ENCODE measurements at regions of chr1 and their contacts with region 1.

Region 1: GRCh38 chr1:211514030-211514754 is 22.2 kb upstream of the RD3 start:
- DNase-seq: peak; percentile 70
- H3K4me3 ChIP-seq: no peak overlapping the region
- H3K27ac ChIP-seq: no peak overlapping the region
- H3K4me1 ChIP-seq: no peaks in the 10 kb centered on the region
- H3K27me3 ChIP-seq: no peaks in the 10 kb centered on the region
- CTCF ChIP-seq: peak in 3 of 4 experiments; percentile 54 to 77 (median 75)
- POLR2A ChIP-seq: no peak

Region 2: DNA sequence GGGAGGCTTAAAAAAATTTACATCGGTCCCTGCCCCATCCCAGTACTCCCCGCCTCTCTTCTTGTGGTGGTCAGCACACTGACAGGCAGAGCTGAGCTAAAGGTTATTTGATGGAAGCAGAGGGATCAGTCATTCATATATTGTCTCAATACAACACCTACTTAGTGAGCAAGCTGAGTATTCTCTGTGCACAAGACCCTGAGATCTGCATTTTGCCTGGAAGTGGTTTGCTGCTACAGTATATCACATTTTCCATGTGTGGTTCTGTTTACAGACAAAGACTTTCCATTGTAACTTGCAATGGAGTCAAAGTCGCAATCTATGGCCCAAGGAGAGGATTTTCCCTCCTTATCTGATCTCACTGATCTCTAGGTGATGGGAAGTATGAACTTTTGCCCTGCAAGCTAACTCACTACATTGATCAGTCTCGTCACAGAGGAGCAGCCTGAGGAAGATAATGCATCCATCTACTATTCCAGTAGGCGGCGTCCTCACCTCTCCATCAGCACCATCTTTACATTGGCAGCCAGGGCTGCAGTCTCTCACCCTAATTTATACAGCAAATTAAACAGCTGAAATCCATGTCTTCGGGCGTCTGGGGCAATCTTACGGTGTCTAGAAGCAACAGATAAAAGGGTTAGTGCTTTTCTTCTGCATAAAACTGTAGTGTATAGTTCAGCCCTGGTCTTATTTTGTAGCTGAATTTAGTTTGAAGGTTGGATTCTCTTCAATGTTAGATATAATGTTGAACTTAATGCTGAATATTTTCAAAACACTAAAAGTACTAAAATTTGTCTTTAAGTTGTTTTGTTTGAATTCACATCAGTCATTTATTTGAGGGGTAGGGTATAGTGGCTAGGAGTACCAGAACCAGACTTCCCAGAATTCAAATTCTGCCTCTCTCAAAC is 190.8 kb before region 1 on chr1:
- intact Hi-C with region 1: loop called (anchors 10 kb)
- DNase-seq: peak; percentile 54
- H3K4me3 ChIP-seq: no peak overlapping the region
- H3K27ac ChIP-seq: no peak overlapping the region
- H3K4me1 ChIP-seq: no peaks in the 10 kb centered on the region
- H3K27me3 ChIP-seq: no peaks in the 10 kb centered on the region
- CTCF ChIP-seq: peak; percentile 40 to 81 (median 68)
- POLR2A ChIP-seq: no peak

Region 3: GRCh38 chr1:211382714-211383480 is 131.3 kb before region 1 on chr1:
- intact Hi-C with region 1: loop called (anchors 10 kb)
- DNase-seq: peak; percentile 89
- H3K4me3 ChIP-seq: peak overlapping the region; percentile 50 to 63
- H3K27ac ChIP-seq: peak overlapping the region; percentile 91 to 98
- H3K4me1 ChIP-seq: no peaks in the 10 kb centered on the region
- H3K27me3 ChIP-seq: no peaks in the 10 kb centered on the region
- CTCF ChIP-seq: no peak
- POLR2A ChIP-seq: peak; percentile 84

Region 4: GRCh38 chr1:211469938-211470529 is 44.2 kb before region 1 on chr1:
- intact Hi-C with region 1: loop called (anchors 5 kb)
- DNase-seq: peak; percentile 87
- H3K4me3 ChIP-seq: no peak overlapping the region
- H3K27ac ChIP-seq: no peak overlapping the region
- H3K4me1 ChIP-seq: peaks cover 9% of the 10 kb centered on the region
- H3K27me3 ChIP-seq: no peaks in the 10 kb centered on the region
- CTCF ChIP-seq: peak; percentile 70 to 80 (median 76)
- POLR2A ChIP-seq: no peak

Region 5: DNA sequence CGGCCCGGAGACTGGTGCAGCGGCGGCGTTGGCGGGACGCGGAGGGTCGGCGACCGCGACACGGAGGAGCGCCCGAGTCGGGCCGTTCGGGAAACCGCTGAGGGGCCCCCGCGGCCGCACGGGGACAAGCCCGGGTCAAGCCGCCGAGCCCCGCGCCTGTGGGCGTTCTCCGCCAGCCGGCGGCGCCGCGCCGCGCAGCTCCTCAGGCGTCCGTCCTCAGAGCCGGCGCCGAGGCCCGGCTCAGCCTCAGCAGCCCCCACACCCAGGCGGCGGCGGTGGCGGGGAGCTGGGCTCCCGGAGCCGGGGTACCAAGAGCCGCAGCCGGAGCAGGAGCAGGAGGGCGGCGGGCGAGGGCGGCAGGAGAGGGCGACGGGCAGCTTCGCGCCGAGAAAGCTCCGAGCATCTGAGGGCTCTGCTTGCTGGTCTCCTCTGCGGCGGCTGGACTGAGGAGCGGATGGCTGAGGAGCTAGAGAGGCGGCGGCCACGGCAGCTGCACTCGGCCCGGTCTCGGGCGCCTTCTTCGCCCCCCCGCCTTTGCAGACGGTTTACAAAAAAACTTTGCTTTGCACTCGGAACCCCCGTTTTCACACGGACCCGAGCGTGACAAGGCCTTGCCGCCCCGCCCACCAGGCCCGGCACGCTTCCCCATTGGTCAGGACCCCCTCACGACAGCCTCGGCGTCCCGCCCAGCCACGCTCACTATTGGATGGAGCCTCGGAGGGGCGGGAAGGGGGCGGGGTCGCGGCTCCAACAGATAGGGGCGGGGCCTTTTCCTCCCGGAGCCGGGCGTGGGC is 64.6 kb after region 1 on chr1 and contains the start of gene SLC30A1:
- intact Hi-C with region 1: loop called (anchors 2 kb)
- DNase-seq: peak; percentile 99
- H3K4me3 ChIP-seq: peak within 1 kb of the TSS; percentile 91 to 92
- H3K27ac ChIP-seq: peak within 1 kb of the TSS; percentile 91 to 95
- H3K4me1 ChIP-seq: no peaks in the 10 kb centered on the region
- H3K27me3 ChIP-seq: no peaks in the 10 kb centered on the region
- CTCF ChIP-seq: peak in 1 of 4 experiments; percentile 10
- POLR2A ChIP-seq: peak; percentile 95
- total RNA-seq, gene SLC30A1: 12.5 to 22.0 TPM

Region 6: DNA sequence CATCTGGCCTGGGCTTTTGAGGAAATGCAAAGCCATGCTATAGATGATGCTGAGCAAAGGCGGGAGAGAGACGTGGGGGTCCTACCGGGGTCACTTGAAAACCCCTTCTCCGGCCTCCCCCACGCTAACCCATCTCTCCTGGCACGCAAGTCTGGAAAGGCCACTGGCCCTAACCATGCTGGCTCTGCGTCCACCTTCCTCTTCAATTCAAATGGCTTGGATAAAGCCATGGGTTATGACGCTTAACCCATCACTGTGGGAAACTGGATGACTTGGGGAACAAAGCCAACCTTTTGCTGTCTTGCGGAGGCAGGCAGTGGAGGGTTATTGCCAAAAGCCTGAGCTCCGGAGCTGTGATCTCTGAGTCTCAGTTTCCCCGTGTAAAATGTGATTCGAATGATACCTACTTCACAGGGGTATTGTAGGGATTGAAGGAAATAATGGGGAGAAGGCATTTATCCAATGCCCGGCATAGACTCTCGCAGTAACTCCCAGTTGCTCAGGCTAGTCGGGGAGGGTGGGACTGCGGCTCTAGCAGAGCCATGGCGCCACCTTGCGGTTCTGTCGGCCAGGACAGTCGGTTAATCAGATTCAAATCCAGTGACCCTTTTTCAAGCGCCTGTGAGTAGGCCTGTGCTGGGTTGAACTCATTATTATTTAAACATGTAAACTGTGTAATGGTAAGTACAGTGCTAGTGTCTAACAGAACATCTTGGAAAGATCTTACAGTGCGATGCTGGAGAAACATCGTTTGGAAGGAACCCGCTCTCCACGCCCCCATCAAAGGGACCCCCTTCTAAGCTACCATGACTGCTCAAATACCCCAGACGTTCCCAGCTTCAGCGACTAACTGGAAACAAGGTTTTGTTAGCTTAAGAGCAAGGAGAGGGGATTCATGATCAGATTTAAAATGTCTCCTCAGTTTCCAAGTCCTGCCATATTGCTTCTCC is 140.9 kb after region 1 on chr1:
- intact Hi-C with region 1: loop called (anchors 2 kb)
- DNase-seq: peak; percentile 85
- H3K4me3 ChIP-seq: no peak overlapping the region
- H3K27ac ChIP-seq: no peak overlapping the region
- H3K4me1 ChIP-seq: no peaks in the 10 kb centered on the region
- H3K27me3 ChIP-seq: no peaks in the 10 kb centered on the region
- CTCF ChIP-seq: peak; percentile 83 to 94 (median 90)
- POLR2A ChIP-seq: no peak